ENCODE measurements at regions of chr6 and their contacts with region 1.

Region 1: GRCh38 chr6:105981002-105981887 is 104.9 kb upstream of the PRDM1 start:
- DNase-seq: no peak
- ATAC-seq: no peak
- H3K4me3 ChIP-seq: no peak overlapping the region
- H3K27ac ChIP-seq: no peak overlapping the region
- H3K4me1 ChIP-seq: peaks cover 0 to 11% of the 10 kb centered on the region in 2 experiments; a peak in 2 of 5 replicates
- H3K27me3 ChIP-seq: peaks cover 7 to 38% of the 10 kb centered on the region in 2 experiments; a peak in 4 of 5 replicates
- CTCF ChIP-seq: no peak
- EP300 ChIP-seq: no peak
- POLR2A ChIP-seq: no peak
- RAD21 ChIP-seq: no peak

Region 2: GRCh38 chr6:105992315-105992961 is 11.2 kb after region 1 on chr6:
- CTCF ChIA-PET with region 1: no interaction called
- POLR2A ChIA-PET with region 1: interaction called, 13 read pairs
- in situ Hi-C with region 1: no loop called
- intact Hi-C with region 1: no loop called
- DNase-seq: peak; percentile 87 to 97 (median 97)
- ATAC-seq: peak; percentile 100
- H3K4me3 ChIP-seq: peak overlapping the region; percentile 59
- H3K27ac ChIP-seq: peak overlapping the region; percentile 11; the same call in 1 of the 3 replicates
- H3K4me1 ChIP-seq: peaks cover 7 to 13% of the 10 kb centered on the region in 2 experiments; a peak in 4 of 5 replicates
- H3K27me3 ChIP-seq: 0 out of 5 replicates have a peak, but pooled peaks cover 0 to 2% of the 10 kb centered on the region in 2 experiments
- CTCF ChIP-seq: no peak
- EP300 ChIP-seq: no peak
- POLR2A ChIP-seq: no peak; the same call in 1 of the 2 replicates
- RAD21 ChIP-seq: no peak

Region 3: GRCh38 chr6:106411056-106411455 is 429.8 kb after region 1 on chr6:
- CTCF ChIA-PET with region 1: no interaction called
- POLR2A ChIA-PET with region 1: no interaction called
- in situ Hi-C with region 1: no loop called
- intact Hi-C with region 1: no loop called
- DNase-seq: no peak
- ATAC-seq: no peak
- H3K4me3 ChIP-seq: no peak overlapping the region
- H3K27ac ChIP-seq: no peak overlapping the region
- H3K4me1 ChIP-seq: no peaks in the 10 kb centered on the region
- H3K27me3 ChIP-seq: peaks cover 3 to 13% of the 10 kb centered on the region in 2 experiments; a peak in 4 of 5 replicates
- CTCF ChIP-seq: no peak
- EP300 ChIP-seq: no peak
- POLR2A ChIP-seq: no peak
- RAD21 ChIP-seq: no peak

Region 4: GRCh38 chr6:106496818-106497217 is 515.6 kb after region 1 on chr6:
- CTCF ChIA-PET with region 1: no interaction called
- POLR2A ChIA-PET with region 1: no interaction called
- in situ Hi-C with region 1: no loop called
- intact Hi-C with region 1: no loop called
- DNase-seq: no peak
- ATAC-seq: no peak
- H3K4me3 ChIP-seq: no peak overlapping the region
- H3K27ac ChIP-seq: no peak overlapping the region
- H3K4me1 ChIP-seq: no peaks in the 10 kb centered on the region
- H3K27me3 ChIP-seq: peaks cover 7 to 18% of the 10 kb centered on the region in 2 experiments; a peak in 3 of 5 replicates
- CTCF ChIP-seq: no peak
- EP300 ChIP-seq: no peak
- POLR2A ChIP-seq: no peak
- RAD21 ChIP-seq: no peak

Measured in K562 (cell line).